Mucosa of descending colon (tissue), 3 donors: ENCODE measurements at regions of chr7 and their contacts with region 1.

Region 1: GRCh38 chr7:35185907-35186731 is 67.8 kb downstream of the TBX20 start:
- DNase-seq: peak in 2 of 3 donors; percentile 18 to 45
- ATAC-seq: peak; percentile 26
- H3K4me3 ChIP-seq: no peak overlapping the region
- H3K4me1 ChIP-seq: peaks cover 8% of the 10 kb centered on the region
- CTCF ChIP-seq: no peak

Region 2: GRCh38 chr7:35537067-35538023 is 351.2 kb after region 1 on chr7:
- intact Hi-C with region 1: loop called in 1 of 2 experiments (anchors 10 kb)
- DNase-seq: peak; percentile 71 to 87 (median 87)
- ATAC-seq: peak; percentile 98
- H3K4me3 ChIP-seq: no peak overlapping the region
- H3K4me1 ChIP-seq: peaks cover 3% of the 10 kb centered on the region
- CTCF ChIP-seq: peak; percentile 90